Aorta (tissue), 5 donors: ENCODE measurements at regions of chr16 and their contacts with region 1.

Region 1: DNA sequence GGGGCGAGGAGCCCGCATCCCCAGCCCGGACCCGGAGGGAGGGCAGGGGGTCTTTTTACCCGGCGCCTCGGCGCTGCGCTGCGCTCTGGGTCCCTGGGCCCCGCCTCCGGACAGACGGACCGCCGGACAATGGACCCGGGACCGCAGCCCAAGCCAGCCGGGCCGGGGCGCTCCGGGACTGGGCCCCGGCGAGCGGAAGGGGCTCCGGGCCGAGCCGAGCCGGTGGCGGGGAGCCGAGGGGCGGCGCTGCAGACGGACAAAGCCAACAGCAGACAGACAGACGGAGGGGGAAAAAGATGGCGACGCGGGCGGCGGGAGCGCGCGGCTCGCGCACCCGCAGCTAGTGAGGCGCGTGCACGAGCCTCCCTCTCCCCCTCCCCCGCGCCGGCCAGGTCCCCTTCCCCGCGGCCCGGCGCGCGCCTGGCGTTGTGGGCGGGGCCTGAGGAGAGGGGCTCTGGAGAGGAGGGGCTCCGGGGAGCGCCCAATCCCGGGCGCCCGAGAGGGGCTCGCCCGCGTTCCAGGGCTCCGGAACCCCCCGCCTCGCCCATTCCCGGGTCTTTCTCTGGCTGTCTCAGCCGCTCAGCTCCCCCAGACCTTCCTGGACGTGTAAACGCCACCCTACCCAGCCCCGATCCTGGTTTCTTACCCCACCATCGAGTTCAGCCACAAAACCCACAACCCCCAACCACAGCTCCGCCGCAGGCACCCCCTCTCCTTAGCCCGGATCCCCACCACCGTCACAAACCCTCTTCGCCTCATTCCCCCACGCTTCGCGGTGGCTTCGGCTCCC is at the start of gene ZNF821:
- DNase-seq: peak; percentile 86 to 92
- ATAC-seq: peak; percentile 93
- H3K4me3 ChIP-seq: peak within 1 kb of the TSS; percentile 58 to 86
- H3K27ac ChIP-seq: peak within 1 kb of the TSS; percentile 83
- H3K4me1 ChIP-seq: no peaks in the 10 kb centered on the region
- H3K27me3 ChIP-seq: no peaks in the 10 kb centered on the region
- total RNA-seq, gene ZNF821: 7.9 to 9.9 TPM

Region 2: GRCh38 chr16:71961066-71962039 is 77.3 kb after region 1 on chr16:
- intact Hi-C with region 1: loop called (anchors 5 to 10 kb)
- DNase-seq: peak; percentile 87 to 92
- ATAC-seq: peak; percentile 91
- H3K4me3 ChIP-seq: no peak overlapping the region
- H3K27ac ChIP-seq: no peak overlapping the region
- H3K4me1 ChIP-seq: no peaks in the 10 kb centered on the region
- H3K27me3 ChIP-seq: no peaks in the 10 kb centered on the region